Activated T-helper 1 cell treated with anti-CD3 and anti-CD28 coated beads, Interleukin-12 subunit alpha, Interleukin-12 subunit beta, Interleukin-2, Interleukin-4 antibody, amounts not matched to agents 30 ng/mL and 10 ng/mL and 1 ng/mL, durations not matched to agents 14 hours and 24 hours and 36 hours (primary cell): ENCODE measurements at regions of chr7 and their contacts with region 1.

Region 1: GRCh38 chr7:4681886-4682620 is at the start of gene FOXK1:
- DNase-seq: peak; percentile 75
- H3K4me3 Mint-ChIP-seq: peak within 1 kb of the TSS; percentile 99
- H3K27ac Mint-ChIP-seq: peak within 1 kb of the TSS; percentile 99
- H3K4me1 Mint-ChIP-seq: peaks cover 28% of the 10 kb centered on the region
- H3K27me3 Mint-ChIP-seq: peaks cover 2% of the 10 kb centered on the region
- total RNA-seq, gene FOXK1: 37.7 and 37.9 TPM in 2 replicates

Region 2: GRCh38 chr7:3767917-3768777 is 913.9 kb before region 1 on chr7:
- intact Hi-C with region 1: no loop called
- DNase-seq: no peak
- H3K4me3 Mint-ChIP-seq: no peak overlapping the region
- H3K27ac Mint-ChIP-seq: no peak overlapping the region
- H3K4me1 Mint-ChIP-seq: no peaks in the 10 kb centered on the region
- H3K27me3 Mint-ChIP-seq: peaks cover 3% of the 10 kb centered on the region

Region 3: DNA sequence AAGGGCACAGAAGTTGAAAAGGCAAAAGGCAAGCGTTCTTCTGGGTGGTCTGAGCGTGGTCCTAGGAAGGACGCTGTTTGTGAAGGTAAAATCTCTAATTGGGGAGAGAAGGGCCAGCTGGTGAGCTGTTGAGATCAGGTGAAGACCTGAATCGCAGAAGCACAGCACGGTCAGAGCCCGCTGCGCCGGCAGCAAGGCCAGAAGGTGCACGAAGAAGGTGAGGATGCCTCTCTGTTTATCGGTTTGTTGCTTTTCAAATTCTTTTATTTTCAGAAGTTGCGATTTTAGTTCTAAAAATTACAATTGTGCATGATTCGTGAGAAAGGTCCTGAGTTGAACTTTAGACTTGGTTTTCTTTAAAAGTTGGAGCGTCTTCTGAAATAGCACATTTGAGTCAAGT is 247.7 kb before region 1 on chr7:
- intact Hi-C with region 1: no loop called
- DNase-seq: no peak
- H3K4me3 Mint-ChIP-seq: no peak overlapping the region
- H3K27ac Mint-ChIP-seq: no peak overlapping the region
- H3K4me1 Mint-ChIP-seq: no peaks in the 10 kb centered on the region
- H3K27me3 Mint-ChIP-seq: no peaks in the 10 kb centered on the region

Region 4: GRCh38 chr7:4641667-4642467 is 40.2 kb before region 1 on chr7:
- intact Hi-C with region 1: loop called (anchors 1 kb)
- DNase-seq: peak; percentile 96
- H3K4me3 Mint-ChIP-seq: peak overlapping the region; percentile 93
- H3K27ac Mint-ChIP-seq: peak overlapping the region; percentile 86
- H3K4me1 Mint-ChIP-seq: peaks cover 19% of the 10 kb centered on the region
- H3K27me3 Mint-ChIP-seq: no peaks in the 10 kb centered on the region

Region 5: DNA sequence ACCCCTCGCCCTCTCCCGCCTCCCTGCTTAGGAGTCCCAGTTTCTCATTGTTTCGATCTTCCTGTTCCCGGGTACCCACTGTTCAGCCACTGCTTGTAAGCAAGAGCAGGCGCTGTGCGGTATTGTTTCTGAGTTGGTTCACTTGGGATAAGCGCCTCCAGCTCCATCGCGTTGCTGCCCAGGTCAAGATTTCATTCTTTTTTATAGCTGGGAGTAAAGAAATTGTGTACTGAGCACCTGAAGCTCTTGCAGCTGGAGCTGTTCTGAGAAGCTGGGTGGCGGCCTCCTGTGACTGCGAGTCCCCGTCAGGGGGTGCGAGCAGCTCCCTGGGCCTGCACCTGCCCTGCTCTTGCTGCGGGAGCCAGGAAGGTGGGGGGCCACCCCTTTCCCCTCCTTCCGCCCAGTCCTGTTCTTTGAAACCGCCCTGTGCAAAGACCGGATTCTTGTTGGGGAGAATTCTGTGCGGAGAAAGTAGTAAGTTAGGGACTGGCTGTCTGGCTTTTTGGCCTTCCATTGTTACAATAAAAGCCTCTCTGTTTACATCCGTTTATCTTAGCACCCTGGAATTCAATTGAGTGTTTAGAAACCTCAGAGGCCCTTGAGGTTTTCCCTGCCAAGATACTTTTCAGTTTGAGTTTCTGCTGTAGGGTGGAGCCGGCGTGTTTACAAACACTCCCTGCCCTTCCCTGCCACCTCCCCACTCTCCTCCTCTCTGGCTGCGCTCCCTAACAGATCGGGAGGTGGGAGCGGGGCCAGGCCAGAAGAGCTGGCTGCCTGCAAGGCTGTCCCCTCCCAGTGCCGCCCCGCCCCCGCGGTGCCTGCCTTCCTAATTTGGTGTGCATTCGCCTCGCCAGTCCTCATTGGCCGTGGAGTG is 62.6 kb after region 1 on chr7:
- intact Hi-C with region 1: loop called (anchors 1 kb)
- DNase-seq: peak; percentile 73
- H3K4me3 Mint-ChIP-seq: peak overlapping the region; percentile 83
- H3K27ac Mint-ChIP-seq: peak overlapping the region; percentile 93
- H3K4me1 Mint-ChIP-seq: peaks cover 67% of the 10 kb centered on the region
- H3K27me3 Mint-ChIP-seq: no peaks in the 10 kb centered on the region

Region 6: DNA sequence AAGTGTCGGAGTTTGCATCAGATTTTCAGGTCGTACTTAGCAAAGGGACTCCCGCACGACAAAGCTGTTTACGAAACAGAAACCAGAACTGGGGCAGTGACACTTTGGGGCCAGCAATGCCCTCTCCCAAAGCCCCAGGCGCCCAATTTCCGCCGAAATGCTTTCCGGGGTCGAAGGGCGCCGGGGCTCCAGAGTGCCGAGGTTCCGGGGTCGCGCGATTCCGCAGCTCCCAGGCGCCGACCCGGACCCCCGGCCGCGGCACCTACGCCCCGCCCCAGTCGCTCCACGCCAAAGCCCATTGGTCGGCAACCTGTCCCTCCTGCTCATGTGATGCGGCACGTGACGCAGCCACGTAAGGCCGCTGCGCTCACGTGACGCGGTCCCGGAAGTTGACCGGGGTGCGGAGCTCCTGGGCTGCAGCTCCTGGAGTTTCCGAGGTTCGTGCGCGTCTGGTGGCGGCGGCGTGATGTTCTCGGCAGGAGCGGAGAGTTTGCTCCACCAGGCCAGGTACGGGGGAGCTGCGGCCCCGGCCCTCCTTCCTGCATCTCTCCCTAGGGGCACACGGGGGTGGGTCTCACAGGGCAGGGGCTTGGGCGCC is 93.3 kb after region 1 on chr7 and contains the start of gene AP5Z1:
- intact Hi-C with region 1: loop called (anchors 1 kb)
- DNase-seq: peak; percentile 90
- H3K4me3 Mint-ChIP-seq: peak within 1 kb of the TSS; percentile 98
- H3K27ac Mint-ChIP-seq: peak within 1 kb of the TSS; percentile 95
- H3K4me1 Mint-ChIP-seq: peaks cover 45% of the 10 kb centered on the region
- H3K27me3 Mint-ChIP-seq: no peaks in the 10 kb centered on the region
- total RNA-seq, gene AP5Z1: 55.9 and 56.8 TPM in 2 replicates